ENCODE measurements at regions of chr11 and their contacts with region 1.

Region 1: GRCh38 chr11:114036156-114036811 is 23.2 kb upstream of the ZBTB16 start:
- DNase-seq: peak; percentile 27 to 88
- H3K4me3 ChIP-seq: peak overlapping the region; percentile 57 to 59
- H3K27ac ChIP-seq: peak overlapping the region; percentile 77 to 87
- H3K4me1 ChIP-seq: peaks cover 0 to 26% of the 10 kb centered on the region in 2 donors
- H3K27me3 ChIP-seq: no peaks in the 10 kb centered on the region
- CTCF ChIP-seq: peak; percentile 88 to 91 (median 90)

Region 2: DNA sequence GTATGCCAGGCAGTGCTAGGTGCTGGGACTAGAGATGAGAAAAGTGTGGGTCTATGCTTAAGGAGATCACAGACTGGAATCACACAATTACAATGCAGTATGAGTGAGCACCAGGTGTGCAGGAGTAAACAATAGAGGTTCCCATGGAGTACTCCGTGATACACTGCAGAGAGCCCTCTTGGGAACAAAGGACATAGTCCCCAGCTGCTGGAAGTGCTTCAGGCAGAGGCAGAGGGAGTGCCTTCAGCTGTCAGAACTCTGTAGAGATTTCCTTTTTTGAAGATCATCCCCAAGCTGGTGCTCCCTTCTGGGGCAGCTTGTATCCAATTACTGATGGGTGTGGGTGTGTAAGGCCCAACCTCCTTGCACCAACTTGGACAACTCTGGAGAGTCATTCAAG is 1632.2 kb before region 1 on chr11:
- intact Hi-C with region 1: no loop called
- DNase-seq: no peak
- H3K4me3 ChIP-seq: no peak overlapping the region
- H3K27ac ChIP-seq: no peak overlapping the region
- H3K4me1 ChIP-seq: no peaks in the 10 kb centered on the region
- H3K27me3 ChIP-seq: no peaks in the 10 kb centered on the region
- CTCF ChIP-seq: no peak

Region 3: DNA sequence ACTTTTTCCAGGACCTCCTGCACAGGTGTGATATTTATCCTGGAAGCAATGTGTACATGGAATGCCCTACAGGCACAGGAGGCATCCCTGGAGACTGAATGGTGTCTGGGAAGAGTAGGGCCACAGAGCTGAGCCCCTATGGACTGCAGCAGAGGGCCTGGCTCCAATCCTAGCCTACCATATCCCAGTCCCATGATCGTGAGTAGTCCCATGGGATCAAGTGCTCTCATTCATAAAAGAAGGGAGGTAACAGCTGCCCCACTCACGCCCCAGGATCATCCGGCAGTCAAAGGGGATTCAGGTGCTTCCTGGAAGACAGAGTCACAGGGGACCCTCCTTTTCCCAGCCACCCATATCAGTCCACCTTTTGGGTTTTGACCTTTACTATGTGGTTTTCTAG is 624.7 kb before region 1 on chr11:
- intact Hi-C with region 1: no loop called
- DNase-seq: no peak
- H3K4me3 ChIP-seq: no peak overlapping the region
- H3K27ac ChIP-seq: no peak overlapping the region
- H3K4me1 ChIP-seq: no peaks in the 10 kb centered on the region
- H3K27me3 ChIP-seq: no peaks in the 10 kb centered on the region
- CTCF ChIP-seq: no peak

Region 4: GRCh38 chr11:113934761-113935160 is 101.5 kb before region 1 on chr11:
- intact Hi-C with region 1: no loop called
- DNase-seq: no peak
- H3K4me3 ChIP-seq: no peak overlapping the region
- H3K27ac ChIP-seq: no peak overlapping the region
- H3K4me1 ChIP-seq: no peaks in the 10 kb centered on the region
- H3K27me3 ChIP-seq: no peaks in the 10 kb centered on the region
- CTCF ChIP-seq: no peak

Region 5: GRCh38 chr11:113974741-113975470 is 61.4 kb before region 1 on chr11 and contains the start of gene HTR3A:
- intact Hi-C with region 1: no loop called
- DNase-seq: no peak
- H3K4me3 ChIP-seq: no peak within 1 kb of the TSS
- H3K27ac ChIP-seq: no peak within 1 kb of the TSS
- H3K4me1 ChIP-seq: no peaks in the 10 kb centered on the region
- H3K27me3 ChIP-seq: no peaks in the 10 kb centered on the region
- CTCF ChIP-seq: no peak
- total RNA-seq, gene HTR3A: not detected

Region 6: GRCh38 chr11:114059278-114059983 is 23.1 kb after region 1 on chr11 and contains the start of gene ZBTB16:
- intact Hi-C with region 1: loop called (anchors 1 kb)
- DNase-seq: peak; percentile 54 to 94
- H3K4me3 ChIP-seq: peak within 1 kb of the TSS; percentile 87 to 99
- H3K27ac ChIP-seq: peak within 1 kb of the TSS; percentile 97 to 98
- H3K4me1 ChIP-seq: peaks cover 4 to 17% of the 10 kb centered on the region in 2 donors
- H3K27me3 ChIP-seq: no peaks in the 10 kb centered on the region
- CTCF ChIP-seq: peak; percentile 6 to 75 (median 40)
- total RNA-seq, gene ZBTB16: 344 TPM

Measured in ascending aorta (tissue), 2 donors.